Naive thymus-derived CD8-positive, alpha-beta T cell (primary cell): ENCODE measurements at regions of chr22 and their contacts with region 1.

Region 1: GRCh38 chr22:38490915-38491314 is 15.2 kb downstream of the DDX17 start:
- DNase-seq: no peak
- ATAC-seq: peak in 1 of 2 donors; percentile 16
- H3K4me3 Mint-ChIP-seq: no peak overlapping the region
- H3K27ac Mint-ChIP-seq: peak overlapping the region in 8 of 10 donors; percentile 45 to 82 (median 64)
- H3K4me1 Mint-ChIP-seq: peaks cover 18 to 60% (median 44%) of the 10 kb centered on the region in 4 donors
- H3K27me3 Mint-ChIP-seq: no peaks in the 10 kb centered on the region

Region 2: GRCh38 chr22:38479096-38479837 is 11.6 kb before region 1 on chr22:
- POLR2A ChIA-PET with region 1: interaction called, 13 read pairs
- DNase-seq: no peak
- ATAC-seq: no peak
- H3K4me3 Mint-ChIP-seq: no peak overlapping the region
- H3K27ac Mint-ChIP-seq: peak overlapping the region in 9 of 10 donors; percentile 19 to 83 (median 60)
- H3K4me1 Mint-ChIP-seq: peaks cover 7 to 27% (median 14%) of the 10 kb centered on the region in 4 donors
- H3K27me3 Mint-ChIP-seq: no peaks in the 10 kb centered on the region

Region 3: GRCh38 chr22:38503021-38503420 is 12.1 kb after region 1 on chr22:
- POLR2A ChIA-PET with region 1: interaction called, 35 read pairs
- DNase-seq: no peak
- ATAC-seq: no peak
- H3K4me3 Mint-ChIP-seq: peak overlapping the region; percentile 87 to 100 (median 94)
- H3K27ac Mint-ChIP-seq: peak overlapping the region; percentile 53 to 100 (median 92)
- H3K4me1 Mint-ChIP-seq: peaks cover 43 to 78% (median 73%) of the 10 kb centered on the region in 4 donors
- H3K27me3 Mint-ChIP-seq: no peaks in the 10 kb centered on the region